A549 (cell line): ENCODE measurements at regions of chr19 and their contacts with region 1.

Region 1: GRCh38 chr19:46265217-46265828 is 31.5 kb upstream of the HIF3A start:
- DNase-seq: peak; percentile 86 to 91
- ATAC-seq: peak; percentile 89 to 95
- H3K4me3 ChIP-seq: no peak overlapping the region
- H3K27ac ChIP-seq: peak overlapping the region; percentile 14 to 70; a peak in 5 of 6 replicates
- H3K4me1 ChIP-seq: peaks cover 19% of the 10 kb centered on the region
- CTCF ChIP-seq: peak; percentile 99
- EP300 ChIP-seq: no peak
- POLR2A ChIP-seq: no peak
- RAD21 ChIP-seq: peak; percentile 99

Region 2: GRCh38 chr19:46016426-46017094 is 248.8 kb before region 1 on chr19:
- CTCF ChIA-PET with region 1: interaction called, 227 read pairs
- POLR2A ChIA-PET with region 1: no interaction called
- DNase-seq: peak; percentile 84 to 87
- ATAC-seq: peak; percentile 69 to 85
- H3K4me3 ChIP-seq: peak overlapping the region; percentile 59
- H3K27ac ChIP-seq: peak overlapping the region; percentile 54 to 80; a peak in 5 of 6 replicates
- H3K4me1 ChIP-seq: peaks cover 20% of the 10 kb centered on the region
- CTCF ChIP-seq: peak; percentile 74
- EP300 ChIP-seq: no peak
- POLR2A ChIP-seq: no peak
- RAD21 ChIP-seq: peak; percentile 35 to 61; a peak in 4 of 5 replicates

Region 3: DNA sequence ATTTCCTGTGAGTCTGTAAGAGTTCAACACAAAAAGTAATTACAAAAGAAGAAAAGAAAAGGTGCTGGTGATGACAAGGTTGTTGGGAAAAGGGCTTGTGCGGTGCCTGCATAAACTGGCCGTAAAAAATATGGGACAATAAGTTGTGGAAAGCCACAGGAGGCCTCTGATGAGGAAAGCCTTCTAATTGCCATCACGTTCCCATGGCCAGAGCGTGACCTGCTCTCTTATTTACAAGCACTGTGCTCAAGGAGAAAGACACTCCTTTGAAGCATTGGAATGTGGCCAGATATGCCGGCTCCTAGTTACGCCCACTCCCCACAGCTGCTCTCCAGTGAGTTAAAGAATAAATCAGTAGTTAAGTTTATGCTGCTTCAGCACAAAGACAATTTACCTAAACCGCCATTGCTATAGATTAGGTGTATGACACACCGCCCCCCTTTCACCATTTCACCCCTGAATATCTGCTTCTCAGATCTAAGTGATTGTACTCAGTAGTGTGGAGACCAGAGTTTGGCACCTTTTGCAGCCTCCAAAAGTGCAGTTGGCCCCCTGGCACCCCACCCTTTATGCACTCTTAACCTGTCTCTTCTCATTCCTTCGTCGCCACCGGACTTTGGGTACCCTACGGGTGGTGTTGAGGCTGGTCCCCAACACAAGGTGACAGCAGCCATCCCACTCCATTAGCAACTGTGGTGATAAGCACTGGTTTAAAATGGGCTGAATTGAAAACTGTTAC is 234.3 kb before region 1 on chr19:
- CTCF ChIA-PET with region 1: interaction called, 227 read pairs
- POLR2A ChIA-PET with region 1: interaction called, 7 read pairs
- DNase-seq: no peak
- ATAC-seq: no peak
- H3K4me3 ChIP-seq: no peak overlapping the region
- H3K27ac ChIP-seq: peak overlapping the region in 1 of 2 experiments; percentile 39; a peak in 3 of 6 replicates
- H3K4me1 ChIP-seq: no peaks in the 10 kb centered on the region; the same call in 2 of the 3 replicates
- CTCF ChIP-seq: no peak
- EP300 ChIP-seq: no peak
- POLR2A ChIP-seq: no peak
- RAD21 ChIP-seq: no peak

Region 4: DNA sequence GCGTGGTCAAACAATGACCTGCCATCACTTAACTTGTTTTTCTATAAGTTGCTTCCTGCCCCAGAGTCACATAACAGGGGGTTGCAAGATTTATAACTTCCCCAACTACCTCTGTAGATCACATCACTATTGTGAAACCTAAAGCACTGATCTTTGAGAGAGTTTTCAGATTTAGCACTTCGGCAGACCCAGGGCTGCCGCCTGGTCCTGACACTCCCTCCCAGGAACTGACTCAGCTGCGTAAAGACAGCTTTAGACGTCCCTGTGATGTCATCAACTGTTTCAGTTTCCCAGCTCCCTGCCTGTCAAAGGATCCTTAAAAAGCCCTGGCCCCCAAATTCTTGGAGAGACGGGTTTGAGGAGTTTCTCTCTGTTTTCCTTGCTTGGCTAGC is 83.9 kb before region 1 on chr19:
- CTCF ChIA-PET with region 1: interaction called, 13 read pairs
- POLR2A ChIA-PET with region 1: no interaction called
- DNase-seq: peak in 1 of 2 experiments; percentile 65
- ATAC-seq: peak; percentile 73 to 80
- H3K4me3 ChIP-seq: no peak overlapping the region
- H3K27ac ChIP-seq: peak overlapping the region; percentile 32 to 70; a peak in 5 of 6 replicates
- H3K4me1 ChIP-seq: peaks cover 34% of the 10 kb centered on the region
- CTCF ChIP-seq: no peak
- EP300 ChIP-seq: no peak
- POLR2A ChIP-seq: no peak
- RAD21 ChIP-seq: no peak

Region 5: DNA sequence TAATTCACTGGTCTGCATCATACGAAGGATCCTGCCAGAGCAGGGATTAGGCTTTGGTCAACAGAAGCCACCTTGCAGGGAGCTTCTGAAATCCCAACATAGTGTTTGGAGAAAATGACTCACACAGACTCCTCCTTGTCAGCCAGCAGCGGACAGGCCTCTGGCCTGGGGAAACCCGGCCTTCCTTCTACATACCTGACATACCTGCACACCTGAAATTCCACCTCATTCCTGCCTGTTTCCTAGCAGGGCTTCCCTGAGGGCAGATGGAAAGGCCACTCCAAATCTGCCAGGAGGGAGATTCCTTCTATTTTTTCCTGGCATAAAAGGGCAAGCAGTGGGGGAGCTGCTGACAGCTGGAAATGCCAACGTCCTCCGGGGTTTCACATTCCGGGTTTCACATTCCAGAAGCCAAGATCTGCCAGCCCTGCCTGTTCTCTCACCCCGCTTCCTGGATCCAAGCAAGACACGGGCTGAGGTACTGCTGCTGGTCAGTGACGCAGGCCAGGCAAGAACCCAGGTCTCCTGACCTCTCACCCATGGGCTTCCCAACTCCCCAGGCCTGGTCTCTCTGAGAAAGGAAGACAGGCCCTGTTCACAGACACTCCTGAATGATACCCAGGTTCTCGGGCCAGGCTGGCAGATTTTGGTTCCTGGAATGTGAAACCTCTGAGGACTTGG is 54.0 kb before region 1 on chr19:
- CTCF ChIA-PET with region 1: interaction called, 17 read pairs
- POLR2A ChIA-PET with region 1: no interaction called
- DNase-seq: peak in 1 of 2 experiments; percentile 80
- ATAC-seq: peak; percentile 76 to 83
- H3K4me3 ChIP-seq: no peak overlapping the region
- H3K27ac ChIP-seq: peak overlapping the region; percentile 71 to 80
- H3K4me1 ChIP-seq: peaks cover 68% of the 10 kb centered on the region
- CTCF ChIP-seq: no peak
- EP300 ChIP-seq: peak in 1 of 2 experiments; percentile 46; a peak in 1 of 5 replicates
- POLR2A ChIP-seq: no peak
- RAD21 ChIP-seq: peak in 1 of 2 experiments; percentile 21; a peak in 1 of 5 replicates

Region 6: DNA sequence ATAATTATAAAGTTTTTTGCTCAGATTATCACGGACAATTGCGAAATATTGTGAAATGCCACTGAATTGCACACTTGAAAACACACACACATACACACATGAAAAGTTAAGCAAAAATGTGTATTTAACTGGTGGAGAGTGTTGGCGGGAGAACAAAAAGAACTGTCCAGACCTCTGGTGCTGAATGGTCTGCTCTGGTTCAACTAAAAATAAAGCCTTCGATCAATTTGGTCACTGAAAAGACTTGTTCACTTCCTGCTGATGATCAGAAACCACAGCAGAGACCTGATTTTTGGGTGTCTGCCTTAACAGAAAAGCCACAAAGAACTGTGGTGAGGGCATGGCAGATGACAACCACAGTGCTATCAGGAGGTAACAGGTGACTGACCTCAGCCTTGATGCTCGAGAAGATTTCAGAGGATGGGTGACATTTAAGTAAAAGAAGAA is 39.7 kb before region 1 on chr19:
- CTCF ChIA-PET with region 1: interaction called, 80 read pairs
- POLR2A ChIA-PET with region 1: no interaction called
- DNase-seq: no peak
- ATAC-seq: no peak
- H3K4me3 ChIP-seq: no peak overlapping the region
- H3K27ac ChIP-seq: peak overlapping the region; percentile 38 to 86; a peak in 3 of 6 replicates
- H3K4me1 ChIP-seq: peaks cover 66% of the 10 kb centered on the region
- CTCF ChIP-seq: no peak
- EP300 ChIP-seq: no peak
- POLR2A ChIP-seq: no peak
- RAD21 ChIP-seq: no peak

Region 7: DNA sequence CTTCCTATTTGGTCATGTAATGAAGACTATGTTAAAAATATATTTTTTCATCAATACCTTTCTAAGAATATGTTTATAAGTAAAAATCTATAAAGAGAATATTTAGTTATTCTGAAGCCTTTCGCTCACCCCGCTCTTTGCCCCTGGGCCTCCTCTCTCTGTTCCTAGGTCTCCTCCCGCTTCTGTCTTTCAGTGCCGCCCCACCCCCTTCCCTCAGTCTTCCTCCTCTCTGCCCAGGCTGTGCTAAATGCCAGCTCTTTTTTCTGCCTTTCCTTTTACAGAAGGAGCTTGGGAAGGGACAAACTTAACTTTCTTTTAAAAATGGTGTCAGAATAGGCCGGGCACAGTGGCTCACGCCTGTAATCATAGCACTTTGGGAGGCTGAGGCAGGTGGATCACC is 54.3 kb after region 1 on chr19:
- CTCF ChIA-PET with region 1: no interaction called
- POLR2A ChIA-PET with region 1: no interaction called
- DNase-seq: no peak
- ATAC-seq: no peak
- H3K4me3 ChIP-seq: no peak overlapping the region
- H3K27ac ChIP-seq: no peak overlapping the region
- H3K4me1 ChIP-seq: no peaks in the 10 kb centered on the region
- CTCF ChIP-seq: no peak
- EP300 ChIP-seq: no peak
- POLR2A ChIP-seq: no peak
- RAD21 ChIP-seq: no peak